ENCODE measurements at regions of chr10 and their contacts with region 1.

Region 1: GRCh38 chr10:70558871-70559810 is 43.4 kb downstream of the PRF1 start:
- DNase-seq: peak; percentile 14 to 69 (median 52)
- ATAC-seq: peak; percentile 89
- H3K4me3 ChIP-seq: peak overlapping the region; percentile 43
- H3K4me3 Mint-ChIP-seq: peak overlapping the region; percentile 71 to 88 (median 82)
- H3K27ac ChIP-seq: no peak overlapping the region
- H3K27ac Mint-ChIP-seq: peak overlapping the region in 7 of 9 donors; percentile 26 to 85 (median 69)
- H3K4me1 ChIP-seq: peaks cover 0 to 5% of the 10 kb centered on the region in 2 donors
- H3K4me1 Mint-ChIP-seq: peaks cover 13 to 24% (median 16%) of the 10 kb centered on the region in 7 donors
- H3K27me3 ChIP-seq: no peaks in the 10 kb centered on the region
- H3K27me3 Mint-ChIP-seq: peaks cover 0 to 3% (median 0%) of the 10 kb centered on the region in 5 donors

Region 2: GRCh38 chr10:70575874-70576802 is 17.0 kb after region 1 on chr10:
- CTCF ChIA-PET with region 1: interaction called, 3 read pairs
- POLR2A ChIA-PET with region 1: interaction called, 4 read pairs
- intact Hi-C with region 1: loop called in 1 of 2 experiments (anchors 1 kb)
- DNase-seq: no peak
- ATAC-seq: peak; percentile 77
- H3K4me3 ChIP-seq: no peak overlapping the region
- H3K4me3 Mint-ChIP-seq: peak overlapping the region in 9 of 10 donors; percentile 4 to 53 (median 26)
- H3K27ac ChIP-seq: no peak overlapping the region
- H3K27ac Mint-ChIP-seq: peak overlapping the region in 8 of 9 donors; percentile 2 to 84 (median 66)
- H3K4me1 ChIP-seq: peaks cover 34 to 47% of the 10 kb centered on the region in 2 donors
- H3K4me1 Mint-ChIP-seq: peaks cover 44 to 64% (median 48%) of the 10 kb centered on the region in 7 donors
- H3K27me3 ChIP-seq: no peaks in the 10 kb centered on the region
- H3K27me3 Mint-ChIP-seq: peaks cover 0 to 1% (median 0%) of the 10 kb centered on the region in 5 donors

Region 3: GRCh38 chr10:70602665-70603448 is 43.7 kb after region 1 on chr10 and contains the start of gene PRF1:
- CTCF ChIA-PET with region 1: no interaction called
- POLR2A ChIA-PET with region 1: interaction called, 3 read pairs
- intact Hi-C with region 1: loop called (anchors 1 kb)
- DNase-seq: peak; percentile 42 to 79 (median 74)
- ATAC-seq: peak; percentile 85
- H3K4me3 ChIP-seq: peak within 1 kb of the TSS; percentile 88
- H3K4me3 Mint-ChIP-seq: peak within 1 kb of the TSS; percentile 82 to 99 (median 94)
- H3K27ac ChIP-seq: peak within 1 kb of the TSS; percentile 66
- H3K27ac Mint-ChIP-seq: peak within 1 kb of the TSS; percentile 83 to 98 (median 93)
- H3K4me1 ChIP-seq: peaks cover 28 to 37% of the 10 kb centered on the region in 2 donors
- H3K4me1 Mint-ChIP-seq: peaks cover 29 to 60% (median 51%) of the 10 kb centered on the region in 7 donors
- H3K27me3 ChIP-seq: no peaks in the 10 kb centered on the region
- H3K27me3 Mint-ChIP-seq: no peaks in the 10 kb centered on the region
- total RNA-seq, gene PRF1: 8.1 to 198 (median 30.7) TPM

Region 4: DNA sequence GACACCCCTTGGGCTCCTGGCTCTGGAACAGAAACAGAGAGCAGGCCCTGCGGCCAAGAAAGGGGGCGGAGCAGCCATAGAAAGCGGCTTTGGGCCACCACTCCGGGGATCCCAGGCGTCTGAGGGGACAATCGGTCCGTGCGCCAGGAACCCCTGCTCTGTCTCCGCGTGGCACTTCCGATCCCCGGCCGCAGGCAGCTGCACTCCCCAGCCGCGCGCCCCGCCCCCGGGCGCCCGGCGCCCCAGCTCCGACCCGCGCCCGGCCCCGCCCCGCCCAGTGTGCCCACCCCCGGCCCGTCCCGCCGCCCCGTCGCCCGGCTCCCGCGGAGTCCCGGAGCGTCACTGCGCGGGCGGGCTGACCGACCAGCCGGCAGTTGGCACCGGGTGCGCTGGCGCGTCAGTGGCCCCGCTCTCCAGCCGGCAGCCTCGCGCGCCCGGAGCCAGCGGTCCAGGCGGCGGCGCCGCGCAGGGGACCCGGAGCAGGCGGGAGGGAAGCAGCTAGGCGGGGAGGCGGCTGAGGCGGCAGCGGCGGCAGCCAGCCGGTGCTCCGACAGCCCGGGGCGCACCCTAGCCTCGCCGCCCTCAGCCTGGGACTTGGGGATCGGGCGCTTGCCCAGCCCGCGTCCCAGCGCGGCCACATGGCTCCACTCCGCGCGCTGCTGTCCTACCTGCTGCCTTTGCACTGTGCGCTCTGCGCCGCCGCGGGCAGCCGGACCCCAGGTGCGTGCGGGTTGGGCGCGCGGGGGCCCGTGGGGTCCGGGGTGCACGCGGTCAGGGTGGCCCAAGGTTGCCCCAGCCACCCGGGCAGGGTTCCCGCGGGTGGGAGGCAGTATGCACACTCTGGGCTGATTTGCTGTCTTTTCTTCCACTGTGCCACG is 113.3 kb after region 1 on chr10 and contains the start of gene ADAMTS14:
- CTCF ChIA-PET with region 1: no interaction called
- POLR2A ChIA-PET with region 1: no interaction called
- intact Hi-C with region 1: loop called in 1 of 2 experiments (anchors 5 kb)
- DNase-seq: peak in 1 of 9 donors; percentile 57
- ATAC-seq: peak; percentile 42
- H3K4me3 ChIP-seq: no peak within 1 kb of the TSS
- H3K4me3 Mint-ChIP-seq: peak within 1 kb of the TSS; percentile 26 to 81 (median 58)
- H3K27ac ChIP-seq: no peak within 1 kb of the TSS
- H3K27ac Mint-ChIP-seq: peak within 1 kb of the TSS in 1 of 9 donors; percentile 27
- H3K4me1 ChIP-seq: no peaks in the 10 kb centered on the region
- H3K4me1 Mint-ChIP-seq: peaks cover 5 to 14% (median 11%) of the 10 kb centered on the region in 7 donors
- H3K27me3 ChIP-seq: peaks cover 3% of the 10 kb centered on the region in 2 donors
- H3K27me3 Mint-ChIP-seq: peaks cover 37 to 59% (median 47%) of the 10 kb centered on the region in 5 donors
- total RNA-seq, gene ADAMTS14: 0.08 to 0.10 TPM in 2 of 5 experiments, not detected in the others

Region 5: GRCh38 chr10:70758757-70759514 is 199.8 kb after region 1 on chr10:
- CTCF ChIA-PET with region 1: interaction called, 11 read pairs
- POLR2A ChIA-PET with region 1: no interaction called
- intact Hi-C with region 1: loop called (anchors 1 kb)
- DNase-seq: peak; percentile 20 to 70 (median 54)
- ATAC-seq: peak; percentile 58
- H3K4me3 ChIP-seq: no peak overlapping the region
- H3K4me3 Mint-ChIP-seq: peak overlapping the region in 1 of 10 donors; percentile 38
- H3K27ac ChIP-seq: no peak overlapping the region
- H3K27ac Mint-ChIP-seq: peak overlapping the region in 1 of 9 donors; percentile 28
- H3K4me1 ChIP-seq: no peaks in the 10 kb centered on the region
- H3K4me1 Mint-ChIP-seq: peaks cover 0 to 10% (median 0%) of the 10 kb centered on the region in 7 donors
- H3K27me3 ChIP-seq: no peaks in the 10 kb centered on the region
- H3K27me3 Mint-ChIP-seq: peaks cover 0 to 2% (median 0%) of the 10 kb centered on the region in 5 donors

Measured in naive thymus-derived CD4-positive, alpha-beta T cell (primary cell).